Breast epithelium (tissue), 4 donors: ENCODE measurements at regions of chr10 and their contacts with region 1.

Region 1: GRCh38 chr10:119981826-119982225 is 89.3 kb downstream of the SEC23IP start:
- DNase-seq: no peak
- H3K4me3 ChIP-seq: no peak overlapping the region
- H3K27ac ChIP-seq: no peak overlapping the region
- H3K4me1 ChIP-seq: no peaks in the 10 kb centered on the region
- H3K27me3 ChIP-seq: no peaks in the 10 kb centered on the region
- CTCF ChIP-seq: no peak
- POLR2A ChIP-seq: no peak

Region 2: DNA sequence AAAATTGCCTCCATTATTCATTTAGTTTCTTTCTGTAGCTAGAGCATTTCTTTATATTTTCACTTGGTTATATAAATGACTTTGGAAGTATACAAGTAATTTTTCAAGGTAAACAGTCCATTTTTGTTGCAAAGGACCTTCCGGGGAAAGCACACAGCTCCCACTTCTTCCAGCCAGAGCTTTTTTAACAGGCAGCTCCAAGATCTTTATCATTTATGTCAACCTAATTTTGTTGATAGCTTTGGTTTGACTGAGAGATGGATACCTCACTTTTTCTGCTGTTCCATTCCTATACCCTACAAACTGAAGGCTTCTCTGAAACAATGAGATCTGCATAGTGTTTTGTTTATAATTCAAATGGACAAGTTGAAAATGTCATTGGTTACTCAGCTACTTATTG is 1885.8 kb before region 1 on chr10:
- intact Hi-C with region 1: loop called (anchors 10 kb)
- DNase-seq: no peak
- H3K4me3 ChIP-seq: no peak overlapping the region
- H3K27ac ChIP-seq: no peak overlapping the region
- H3K4me1 ChIP-seq: no peaks in the 10 kb centered on the region
- H3K27me3 ChIP-seq: no peaks in the 10 kb centered on the region
- CTCF ChIP-seq: no peak
- POLR2A ChIP-seq: no peak

Region 3: DNA sequence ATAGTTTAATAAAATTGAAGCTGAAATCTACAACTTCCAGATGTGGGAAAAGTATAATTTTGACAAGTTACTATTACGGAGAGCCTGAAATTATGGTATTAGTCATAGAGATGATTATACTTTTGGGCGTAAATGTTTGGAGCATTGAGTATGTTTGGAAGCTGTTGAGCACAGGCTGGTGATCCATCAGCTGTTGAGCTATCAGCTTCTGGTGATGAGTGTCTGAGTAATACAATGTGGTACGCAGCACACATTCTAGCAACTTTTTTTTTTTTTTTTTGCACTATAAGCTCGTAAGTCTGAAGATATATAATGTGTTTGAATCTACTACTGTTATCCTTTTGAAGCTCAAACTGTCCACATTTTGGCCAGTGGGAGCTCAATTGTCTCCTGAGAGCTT is 1822.6 kb after region 1 on chr10:
- intact Hi-C with region 1: no loop called
- DNase-seq: no peak
- H3K4me3 ChIP-seq: no peak overlapping the region
- H3K27ac ChIP-seq: no peak overlapping the region
- H3K4me1 ChIP-seq: no peaks in the 10 kb centered on the region
- H3K27me3 ChIP-seq: no peaks in the 10 kb centered on the region
- CTCF ChIP-seq: no peak
- POLR2A ChIP-seq: no peak